B cell (primary cell): ENCODE measurements at regions of chr1 and their contacts with region 1.

Region 1: GRCh38 chr1:145978854-145979759 is 14.6 kb downstream of the POLR3GL start:
- DNase-seq: peak; percentile 93
- ATAC-seq: peak; percentile 87
- H3K4me3 ChIP-seq: peak overlapping the region; percentile 16 to 52 (median 40)
- H3K4me3 Mint-ChIP-seq: no peak overlapping the region
- H3K27ac ChIP-seq: peak overlapping the region; percentile 96 to 97
- H3K27ac Mint-ChIP-seq: no peak overlapping the region
- H3K4me1 ChIP-seq: peaks cover 70 to 71% of the 10 kb centered on the region in 2 donors
- H3K4me1 Mint-ChIP-seq: peaks cover 30% of the 10 kb centered on the region
- H3K27me3 ChIP-seq: no peaks in the 10 kb centered on the region
- H3K27me3 Mint-ChIP-seq: no peaks in the 10 kb centered on the region
- CTCF ChIP-seq: no peak

Region 2: DNA sequence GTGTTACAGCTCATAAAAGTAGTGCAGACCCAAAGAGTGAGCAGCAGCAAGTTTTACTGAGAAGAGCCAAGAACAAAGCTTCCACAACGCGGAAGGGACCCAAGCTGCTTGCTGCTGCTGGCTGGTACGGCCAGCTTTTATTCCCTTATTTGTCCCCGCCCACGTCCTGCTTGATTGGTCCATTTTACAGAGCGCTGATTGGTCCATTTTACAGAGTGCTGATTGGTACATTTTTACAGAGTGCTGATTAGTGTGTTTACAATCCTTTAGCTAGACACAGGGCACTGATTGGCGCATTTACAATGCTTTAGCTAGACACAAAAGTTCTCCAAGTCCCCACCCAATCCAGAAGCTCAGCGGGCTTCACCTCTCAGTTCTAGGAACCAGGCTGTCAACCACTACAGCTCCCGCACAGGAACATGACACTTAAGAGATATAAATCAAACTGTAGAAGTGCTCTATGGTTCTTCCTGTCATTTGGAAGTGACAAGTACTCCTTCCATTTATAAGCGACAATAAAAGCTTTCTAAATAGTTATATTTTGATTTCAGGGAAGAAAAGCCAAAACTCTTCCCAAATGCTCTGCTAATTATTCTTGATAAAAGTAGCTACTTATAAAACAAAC is 183.7 kb before region 1 on chr1:
- CTCF ChIA-PET with region 1: no interaction called
- POLR2A ChIA-PET with region 1: no interaction called
- intact Hi-C with region 1: no loop called
- DNase-seq: no peak
- ATAC-seq: no peak
- H3K4me3 ChIP-seq: no peak overlapping the region
- H3K4me3 Mint-ChIP-seq: no peak overlapping the region
- H3K27ac ChIP-seq: no peak overlapping the region
- H3K27ac Mint-ChIP-seq: no peak overlapping the region
- H3K4me1 ChIP-seq: no peaks in the 10 kb centered on the region
- H3K4me1 Mint-ChIP-seq: peaks cover 2% of the 10 kb centered on the region
- H3K27me3 ChIP-seq: no peaks in the 10 kb centered on the region
- H3K27me3 Mint-ChIP-seq: no peaks in the 10 kb centered on the region
- CTCF ChIP-seq: no peak

Region 3: GRCh38 chr1:145891587-145892485 is 87.3 kb before region 1 on chr1:
- CTCF ChIA-PET with region 1: interaction called, 16 read pairs
- POLR2A ChIA-PET with region 1: no interaction called
- intact Hi-C with region 1: loop called (anchors 1 kb)
- DNase-seq: peak; percentile 61
- ATAC-seq: peak; percentile 70
- H3K4me3 ChIP-seq: no peak overlapping the region
- H3K4me3 Mint-ChIP-seq: no peak overlapping the region
- H3K27ac ChIP-seq: no peak overlapping the region
- H3K27ac Mint-ChIP-seq: no peak overlapping the region
- H3K4me1 ChIP-seq: no peaks in the 10 kb centered on the region
- H3K4me1 Mint-ChIP-seq: peaks cover under 1% of the 10 kb centered on the region
- H3K27me3 ChIP-seq: no peaks in the 10 kb centered on the region
- H3K27me3 Mint-ChIP-seq: no peaks in the 10 kb centered on the region
- CTCF ChIP-seq: peak; percentile 72

Region 4: DNA sequence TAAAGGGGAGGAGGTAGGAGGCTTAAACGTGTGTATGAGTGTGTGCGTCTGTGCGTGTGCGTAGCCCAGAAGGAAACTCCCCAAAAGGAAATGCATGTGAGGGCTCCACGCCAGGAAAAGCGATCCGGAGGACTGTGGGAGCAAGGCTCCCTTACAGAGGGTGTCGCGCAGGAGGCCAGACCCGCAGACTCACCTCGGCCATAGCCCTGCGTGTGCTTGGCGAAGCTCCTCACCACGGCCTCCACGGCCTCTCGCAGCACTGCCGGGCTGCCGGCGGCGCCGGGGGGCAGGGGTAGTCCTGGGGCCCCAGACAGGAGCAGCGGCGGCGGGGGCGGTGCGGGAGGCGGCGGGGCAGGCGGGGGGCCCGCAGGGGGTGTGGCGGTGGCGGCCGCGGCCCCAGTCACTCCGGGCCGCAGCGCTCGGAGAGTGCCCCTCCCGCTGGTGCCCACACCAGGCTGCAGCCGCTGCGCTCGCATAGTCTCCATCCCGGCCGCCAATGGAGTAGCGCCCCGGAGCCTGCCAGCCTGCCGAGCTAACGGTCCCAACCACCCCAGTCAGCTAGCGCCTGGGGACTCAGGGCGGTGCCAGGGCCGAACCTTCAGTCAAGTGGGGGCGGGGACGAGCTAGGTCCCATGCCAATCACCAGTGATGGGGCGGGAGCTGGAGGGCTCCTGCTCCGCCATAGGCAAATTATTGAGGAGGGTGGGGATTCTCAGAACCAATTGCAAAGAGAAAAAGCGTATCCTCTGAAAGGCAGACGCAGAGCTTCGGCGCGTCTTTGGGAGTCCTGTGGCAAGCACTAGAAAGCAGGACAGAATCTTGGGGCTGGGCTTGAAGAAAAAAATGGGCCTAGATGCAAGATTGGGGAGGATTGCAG is 21.4 kb before region 1 on chr1 and contains the start of gene LIX1L:
- CTCF ChIA-PET with region 1: interaction called, 82 read pairs
- POLR2A ChIA-PET with region 1: interaction called, 17 read pairs
- intact Hi-C with region 1: loop called (anchors 1 kb)
- DNase-seq: peak; percentile 96
- ATAC-seq: peak; percentile 89
- H3K4me3 ChIP-seq: peak within 1 kb of the TSS; percentile 64 to 88 (median 74)
- H3K4me3 Mint-ChIP-seq: peak within 1 kb of the TSS; percentile 99
- H3K27ac ChIP-seq: peak within 1 kb of the TSS; percentile 36 to 83
- H3K27ac Mint-ChIP-seq: peak within 1 kb of the TSS; percentile 96
- H3K4me1 ChIP-seq: peaks cover 45 to 65% of the 10 kb centered on the region in 2 donors
- H3K4me1 Mint-ChIP-seq: peaks cover 76% of the 10 kb centered on the region
- H3K27me3 ChIP-seq: no peaks in the 10 kb centered on the region
- H3K27me3 Mint-ChIP-seq: no peaks in the 10 kb centered on the region
- CTCF ChIP-seq: no peak
- total RNA-seq, gene LIX1L: 31.7 and 32.2 TPM in 2 replicates

Region 5: GRCh38 chr1:146001709-146002108 is 22.6 kb after region 1 on chr1:
- CTCF ChIA-PET with region 1: interaction called, 361 read pairs
- POLR2A ChIA-PET with region 1: interaction called, 131 read pairs
- intact Hi-C with region 1: loop called (anchors 1 kb)
- DNase-seq: no peak
- ATAC-seq: no peak
- H3K4me3 ChIP-seq: no peak overlapping the region
- H3K4me3 Mint-ChIP-seq: no peak overlapping the region
- H3K27ac ChIP-seq: peak overlapping the region in 1 of 2 donors; percentile 61
- H3K27ac Mint-ChIP-seq: peak overlapping the region; percentile 62
- H3K4me1 ChIP-seq: peaks cover 47 to 54% of the 10 kb centered on the region in 2 donors
- H3K4me1 Mint-ChIP-seq: peaks cover 60% of the 10 kb centered on the region
- H3K27me3 ChIP-seq: no peaks in the 10 kb centered on the region
- H3K27me3 Mint-ChIP-seq: no peaks in the 10 kb centered on the region
- CTCF ChIP-seq: no peak

Region 6: GRCh38 chr1:146036965-146037646 is 58.0 kb after region 1 on chr1:
- CTCF ChIA-PET with region 1: interaction called, 60 read pairs
- POLR2A ChIA-PET with region 1: interaction called, 7 read pairs
- intact Hi-C with region 1: no loop called
- DNase-seq: peak; percentile 90
- ATAC-seq: peak; percentile 55
- H3K4me3 ChIP-seq: peak overlapping the region; percentile 84 to 96 (median 93)
- H3K4me3 Mint-ChIP-seq: peak overlapping the region; percentile 99
- H3K27ac ChIP-seq: peak overlapping the region; percentile 74 to 83
- H3K27ac Mint-ChIP-seq: peak overlapping the region; percentile 98
- H3K4me1 ChIP-seq: peaks cover 27 to 30% of the 10 kb centered on the region in 2 donors
- H3K4me1 Mint-ChIP-seq: peaks cover 37% of the 10 kb centered on the region
- H3K27me3 ChIP-seq: no peaks in the 10 kb centered on the region
- H3K27me3 Mint-ChIP-seq: no peaks in the 10 kb centered on the region
- CTCF ChIP-seq: no peak